IMR-90 (cell line): ENCODE measurements at regions of chr3 and their contacts with region 1.

Region 1: GRCh38 chr3:78887547-78888011 is 880.2 kb downstream of the ROBO1 start:
- DNase-seq: peak; percentile 60
- ATAC-seq: peak; percentile 37; the same call in 1 of the 2 replicates
- H3K4me3 ChIP-seq: no peak overlapping the region
- H3K27ac ChIP-seq: no peak overlapping the region
- H3K4me1 ChIP-seq: peaks cover 5% of the 10 kb centered on the region
- H3K27me3 ChIP-seq: no peaks in the 10 kb centered on the region
- CTCF ChIP-seq: no peak
- POLR2A ChIP-seq: no peak
- RAD21 ChIP-seq: no peak

Region 2: GRCh38 chr3:77672016-77672415 is 1215.6 kb before region 1 on chr3:
- CTCF ChIA-PET with region 1: no interaction called
- POLR2A ChIA-PET with region 1: no interaction called
- dilution Hi-C with region 1: no loop called
- in situ Hi-C with region 1: no loop called
- intact Hi-C with region 1: no loop called
- DNase-seq: no peak
- ATAC-seq: no peak
- H3K4me3 ChIP-seq: no peak overlapping the region
- H3K27ac ChIP-seq: no peak overlapping the region
- H3K4me1 ChIP-seq: no peaks in the 10 kb centered on the region
- H3K27me3 ChIP-seq: no peaks in the 10 kb centered on the region
- CTCF ChIP-seq: no peak
- POLR2A ChIP-seq: no peak
- RAD21 ChIP-seq: no peak

Region 3: DNA sequence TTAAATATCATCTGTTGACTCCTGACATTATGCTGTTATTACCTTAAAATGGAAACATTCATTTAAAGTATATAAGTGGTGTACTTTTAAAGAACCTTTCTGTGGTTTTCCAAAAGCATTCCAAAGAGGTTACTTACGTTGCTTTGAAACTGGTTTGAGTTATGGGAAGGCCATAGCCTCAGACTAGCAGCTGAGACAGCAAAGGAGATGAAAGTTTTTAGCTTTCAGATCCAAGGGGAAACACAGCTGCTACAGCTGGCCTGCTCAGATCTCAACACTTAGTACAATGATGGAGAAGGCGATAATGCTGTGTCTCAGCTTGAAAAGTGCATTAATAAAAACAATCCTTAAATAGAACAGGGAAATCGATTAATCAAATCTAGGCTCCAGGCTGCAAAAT is 40.9 kb before region 1 on chr3:
- CTCF ChIA-PET with region 1: no interaction called
- POLR2A ChIA-PET with region 1: no interaction called
- dilution Hi-C with region 1: no loop called
- in situ Hi-C with region 1: no loop called
- intact Hi-C with region 1: loop called (anchors 5 kb)
- DNase-seq: peak; percentile 89
- ATAC-seq: peak; percentile 80
- H3K4me3 ChIP-seq: no peak overlapping the region
- H3K27ac ChIP-seq: no peak overlapping the region
- H3K4me1 ChIP-seq: peaks cover 2% of the 10 kb centered on the region; the same call in 1 of the 2 replicates
- H3K27me3 ChIP-seq: no peaks in the 10 kb centered on the region
- CTCF ChIP-seq: no peak
- POLR2A ChIP-seq: no peak
- RAD21 ChIP-seq: no peak